HepG2 (cell line): ENCODE measurements at regions of chr10 and their contacts with region 1.

Region 1: DNA sequence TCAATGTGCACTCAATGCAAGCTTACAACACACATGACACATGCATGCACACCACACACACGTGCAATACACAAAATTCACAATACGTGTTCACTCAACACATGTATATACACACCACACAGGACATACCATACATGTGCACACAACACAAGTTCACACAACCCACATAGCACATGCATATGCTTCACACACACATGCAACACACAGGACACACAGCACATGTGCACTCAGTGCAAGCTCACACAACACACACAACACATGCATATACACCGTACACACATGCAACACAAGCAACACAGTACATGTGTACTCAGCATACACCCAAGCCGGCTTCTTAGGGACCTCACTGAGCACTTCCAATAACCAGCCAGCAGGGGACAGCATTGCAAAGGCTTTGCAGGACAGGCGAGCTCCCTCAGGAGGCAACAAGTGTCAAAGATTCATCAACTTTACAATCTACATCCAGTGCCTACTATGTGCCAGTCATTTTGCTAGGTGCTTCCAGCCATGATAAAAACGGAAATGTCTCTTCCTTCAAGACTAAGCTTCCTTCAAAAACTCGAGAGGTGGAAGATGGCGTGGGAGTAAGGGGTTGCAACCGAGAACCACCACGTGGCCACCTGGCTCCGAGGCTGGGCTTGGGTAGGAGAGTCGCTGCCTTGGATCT is 61.1 kb downstream of the JCAD start:
- DNase-seq: peak; percentile 71
- ATAC-seq: peak; percentile 70
- H3K4me3 ChIP-seq: no peak overlapping the region
- H3K27ac ChIP-seq: no peak overlapping the region
- H3K4me1 ChIP-seq: peaks cover 36% of the 10 kb centered on the region
- H3K27me3 ChIP-seq: no peaks in the 10 kb centered on the region; a peak in 1 of 5 replicates
- CTCF ChIP-seq: peak; percentile 98
- EP300 ChIP-seq: no peak
- POLR2A ChIP-seq: no peak
- RAD21 ChIP-seq: peak; percentile 82

Region 2: GRCh38 chr10:30092151-30092790 is 94.0 kb after region 1 on chr10:
- CTCF ChIA-PET with region 1: no interaction called
- POLR2A ChIA-PET with region 1: no interaction called
- in situ Hi-C with region 1: no loop called
- intact Hi-C with region 1: no loop called
- DNase-seq: no peak
- ATAC-seq: no peak
- H3K4me3 ChIP-seq: no peak overlapping the region
- H3K27ac ChIP-seq: no peak overlapping the region
- H3K4me1 ChIP-seq: peaks cover 34% of the 10 kb centered on the region
- H3K27me3 ChIP-seq: no peaks in the 10 kb centered on the region
- CTCF ChIP-seq: no peak
- EP300 ChIP-seq: no peak
- POLR2A ChIP-seq: no peak
- RAD21 ChIP-seq: no peak

Region 3: GRCh38 chr10:30231071-30231652 is 232.9 kb after region 1 on chr10:
- CTCF ChIA-PET with region 1: no interaction called
- POLR2A ChIA-PET with region 1: no interaction called
- in situ Hi-C with region 1: loop called (anchors 10 kb)
- intact Hi-C with region 1: no loop called
- DNase-seq: peak; percentile 13
- ATAC-seq: peak; percentile 83
- H3K4me3 ChIP-seq: no peak overlapping the region
- H3K27ac ChIP-seq: no peak overlapping the region
- H3K4me1 ChIP-seq: peaks cover 11% of the 10 kb centered on the region; the same call in 1 of the 2 replicates
- H3K27me3 ChIP-seq: no peaks in the 10 kb centered on the region
- CTCF ChIP-seq: no peak
- EP300 ChIP-seq: no peak
- POLR2A ChIP-seq: no peak
- RAD21 ChIP-seq: no peak

Region 4: DNA sequence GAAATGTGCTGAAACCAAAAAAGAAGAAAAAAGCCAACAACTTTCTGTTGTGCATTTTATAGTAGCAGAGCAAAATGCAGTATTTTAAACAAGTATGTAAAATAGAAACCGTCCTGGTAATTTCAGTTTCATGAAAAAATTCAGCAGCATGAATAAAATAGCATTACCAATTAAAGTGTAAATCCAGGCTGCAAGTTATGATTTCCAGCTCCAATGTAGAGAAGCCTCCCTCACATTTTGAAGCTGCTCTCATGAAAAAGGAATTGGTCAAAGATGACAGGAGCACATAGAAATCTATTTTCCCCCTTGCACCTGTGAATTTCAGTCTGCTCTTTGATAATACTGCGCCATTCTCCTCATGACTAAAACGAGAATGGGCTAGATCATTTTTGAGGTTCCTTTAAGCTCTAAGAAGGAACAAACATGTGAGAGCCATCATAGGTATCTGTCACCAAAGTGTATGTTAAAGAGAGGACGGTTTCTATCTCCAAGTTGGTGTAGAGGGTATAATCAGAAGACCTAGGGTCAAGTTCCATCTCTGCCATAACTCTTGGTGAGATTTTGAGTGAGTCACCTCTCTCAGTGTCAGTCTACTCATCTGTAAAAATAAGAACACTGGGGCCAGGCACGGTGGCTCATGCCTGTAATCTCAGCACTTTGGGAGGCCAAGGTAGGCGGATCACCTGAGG is 243.3 kb after region 1 on chr10:
- CTCF ChIA-PET with region 1: interaction called, 24 read pairs
- POLR2A ChIA-PET with region 1: no interaction called
- in situ Hi-C with region 1: loop called (anchors 10 kb)
- intact Hi-C with region 1: loop called (anchors 1 kb)
- DNase-seq: no peak
- ATAC-seq: no peak
- H3K4me3 ChIP-seq: no peak overlapping the region
- H3K27ac ChIP-seq: no peak overlapping the region
- H3K4me1 ChIP-seq: no peaks in the 10 kb centered on the region
- H3K27me3 ChIP-seq: no peaks in the 10 kb centered on the region
- CTCF ChIP-seq: no peak
- EP300 ChIP-seq: no peak
- POLR2A ChIP-seq: no peak
- RAD21 ChIP-seq: no peak